ENCODE measurements at regions of chr19 and their contacts with region 1.

Region 1: GRCh38 chr19:55141696-55142095 is 7.3 kb downstream of the TNNT1 start:
- DNase-seq: no peak
- H3K4me3 ChIP-seq: no peak overlapping the region
- H3K27ac ChIP-seq: no peak overlapping the region
- H3K27me3 ChIP-seq: peaks cover 15% of the 10 kb centered on the region
- CTCF ChIP-seq: no peak

Region 2: DNA sequence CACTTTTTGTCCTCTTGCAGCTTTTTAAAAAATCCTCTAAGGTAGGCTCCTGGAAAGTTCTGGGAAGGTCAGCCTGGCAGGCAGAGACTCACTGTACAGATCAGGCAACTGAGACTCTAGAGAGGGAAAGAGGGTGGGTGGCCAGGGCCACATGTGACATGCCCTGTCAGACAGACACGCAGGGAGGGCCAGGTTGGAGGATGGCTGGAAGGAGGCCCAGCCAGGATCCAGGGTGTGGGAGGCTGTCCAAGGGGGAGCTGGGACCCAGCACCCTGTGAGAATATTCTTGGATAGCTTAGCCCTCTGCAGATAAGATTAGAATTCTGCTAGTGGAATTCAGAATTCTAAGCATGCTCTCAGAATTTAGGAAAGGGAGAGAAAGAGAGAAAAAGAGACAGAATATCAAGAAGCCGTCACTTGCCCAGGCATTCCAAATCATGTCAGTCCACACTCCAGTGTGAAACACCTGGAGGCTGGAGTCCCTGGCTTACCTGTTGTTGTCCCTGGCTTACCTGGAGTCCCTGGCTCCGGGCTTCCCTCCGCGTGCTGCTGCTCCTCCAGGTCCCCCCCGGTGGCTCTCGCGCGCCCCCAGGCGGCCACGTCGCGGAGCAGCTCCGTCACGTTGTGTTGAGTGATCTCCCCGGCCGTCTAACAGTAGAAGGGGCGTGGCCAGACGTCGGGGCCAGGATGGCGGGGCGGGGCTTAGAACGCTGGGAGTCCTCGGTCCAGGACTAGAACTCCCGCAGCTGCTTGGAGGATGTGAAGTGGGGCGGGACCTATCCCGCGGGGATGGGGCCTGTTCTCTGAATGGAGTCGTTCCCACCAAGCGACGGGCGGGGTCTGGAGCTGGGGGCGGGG is 18.7 kb after region 1 on chr19:
- CTCF ChIA-PET with region 1: interaction called, 44 read pairs
- POLR2A ChIA-PET with region 1: no interaction called
- DNase-seq: no peak
- H3K4me3 ChIP-seq: no peak overlapping the region
- H3K27ac ChIP-seq: no peak overlapping the region
- H3K27me3 ChIP-seq: peaks cover 34% of the 10 kb centered on the region
- CTCF ChIP-seq: peak; percentile 85

Region 3: GRCh38 chr19:55166530-55167268 is 25.0 kb after region 1 on chr19 and contains the start of gene DNAAF3:
- CTCF ChIA-PET with region 1: interaction called, 12 read pairs
- POLR2A ChIA-PET with region 1: no interaction called
- DNase-seq: peak; percentile 90
- H3K4me3 ChIP-seq: peak within 1 kb of the TSS; percentile 64
- H3K27ac ChIP-seq: no peak within 1 kb of the TSS
- H3K27me3 ChIP-seq: peaks cover 15% of the 10 kb centered on the region
- CTCF ChIP-seq: no peak
- polyA plus RNA-seq, gene DNAAF3: 0.21 TPM in 1 of 2 replicates, not detected in the other

Region 4: GRCh38 chr19:55289117-55289796 is 147.6 kb after region 1 on chr19:
- CTCF ChIA-PET with region 1: interaction called, 15 read pairs
- POLR2A ChIA-PET with region 1: no interaction called
- DNase-seq: no peak
- H3K4me3 ChIP-seq: no peak overlapping the region
- H3K27ac ChIP-seq: no peak overlapping the region
- H3K27me3 ChIP-seq: no peaks in the 10 kb centered on the region
- CTCF ChIP-seq: no peak

Region 5: DNA sequence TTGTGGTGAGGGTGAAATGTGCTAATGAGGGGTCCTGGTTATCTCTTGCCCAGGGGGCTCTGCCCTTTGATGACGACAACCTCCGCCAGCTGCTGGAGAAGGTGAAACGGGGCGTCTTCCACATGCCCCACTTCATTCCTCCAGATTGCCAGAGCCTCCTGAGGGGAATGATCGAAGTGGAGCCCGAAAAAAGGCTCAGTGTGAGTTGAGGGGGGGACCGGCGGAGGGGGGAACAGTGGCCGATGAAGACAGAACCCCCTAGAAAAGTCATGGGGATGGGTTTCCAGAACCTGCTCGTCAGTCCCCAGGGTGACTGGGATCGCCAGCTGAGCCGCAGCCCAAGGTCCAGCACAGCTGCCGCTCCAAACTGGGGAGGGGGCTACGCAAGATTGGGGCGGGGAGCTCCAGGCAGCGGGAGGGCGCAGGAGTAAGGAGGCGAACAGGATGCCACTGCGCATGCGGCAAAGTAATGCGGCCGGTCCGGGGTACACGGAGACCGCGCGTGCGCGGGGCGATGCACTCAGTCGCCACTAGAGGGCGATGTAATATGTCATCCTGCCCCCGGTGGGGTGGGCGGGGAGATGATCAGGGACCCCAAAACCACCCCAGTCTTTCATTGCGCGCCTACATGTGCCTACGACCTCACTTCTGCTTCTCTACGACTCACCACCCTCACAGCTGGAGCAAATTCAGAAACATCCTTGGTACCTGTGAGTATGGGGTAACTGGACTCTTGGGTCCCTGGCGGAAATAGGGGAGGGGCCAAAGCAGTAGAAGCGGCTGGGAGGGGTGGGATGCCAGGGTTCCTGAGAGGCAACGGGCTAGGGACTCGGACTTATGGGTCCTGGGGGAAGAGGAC is 160.0 kb after region 1 on chr19:
- CTCF ChIA-PET with region 1: interaction called, 10 read pairs
- POLR2A ChIA-PET with region 1: no interaction called
- DNase-seq: peak; percentile 24
- H3K4me3 ChIP-seq: peak overlapping the region; percentile 41
- H3K27ac ChIP-seq: no peak overlapping the region
- H3K27me3 ChIP-seq: no peaks in the 10 kb centered on the region
- CTCF ChIP-seq: peak; percentile 78

Region 6: DNA sequence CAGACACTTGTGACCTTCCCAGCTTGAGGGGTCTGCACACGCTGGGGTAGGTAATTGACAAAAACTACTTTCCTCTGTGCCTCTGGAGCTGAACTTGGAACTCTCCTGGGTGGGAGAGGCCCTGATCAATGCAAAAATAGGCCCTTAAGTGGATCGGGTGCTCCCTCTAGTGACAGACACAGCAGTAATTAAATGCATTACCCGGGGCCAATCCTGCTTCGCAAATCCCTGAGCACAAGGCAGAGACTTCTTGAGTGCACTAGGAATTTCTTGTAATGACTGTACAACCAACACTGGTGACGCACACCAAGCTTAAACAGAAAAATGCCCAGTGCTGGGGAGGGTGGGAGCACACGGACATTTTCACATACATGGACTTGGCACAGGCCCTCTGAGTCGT is 276.5 kb after region 1 on chr19:
- CTCF ChIA-PET with region 1: interaction called, 62 read pairs
- POLR2A ChIA-PET with region 1: interaction called, 8 read pairs
- DNase-seq: peak; percentile 73
- H3K4me3 ChIP-seq: no peak overlapping the region
- H3K27ac ChIP-seq: no peak overlapping the region
- H3K27me3 ChIP-seq: peaks cover 5% of the 10 kb centered on the region
- CTCF ChIP-seq: peak; percentile 82

Region 7: GRCh38 chr19:55452749-55453346 is 311.2 kb after region 1 on chr19:
- CTCF ChIA-PET with region 1: interaction called, 13 read pairs
- POLR2A ChIA-PET with region 1: no interaction called
- DNase-seq: peak; percentile 27
- H3K4me3 ChIP-seq: no peak overlapping the region; the same call in 1 of the 2 replicates
- H3K27ac ChIP-seq: no peak overlapping the region
- H3K27me3 ChIP-seq: peaks cover 28% of the 10 kb centered on the region
- CTCF ChIP-seq: no peak

Measured in AG04450 (cell line).